CD4-positive, alpha-beta memory T cell (primary cell): ENCODE measurements at regions of chr12 and their contacts with region 1.

Region 1: GRCh38 chr12:117836999-117837736 is 131.6 kb downstream of the KSR2 start:
- DNase-seq: peak; percentile 48 to 63 (median 58)
- H3K4me3 ChIP-seq: no peak overlapping the region
- H3K4me3 Mint-ChIP-seq: peak overlapping the region in 7 of 8 donors; percentile 22 to 71 (median 59)
- H3K27ac ChIP-seq: no peak overlapping the region
- H3K27ac Mint-ChIP-seq: peak overlapping the region in 1 of 7 donors; percentile 37
- H3K4me1 ChIP-seq: no peaks in the 10 kb centered on the region
- H3K4me1 Mint-ChIP-seq: peaks cover 3 to 11% (median 6%) of the 10 kb centered on the region in 4 donors
- H3K27me3 ChIP-seq: no peaks in the 10 kb centered on the region
- H3K27me3 Mint-ChIP-seq: peaks cover 6 to 7% of the 10 kb centered on the region in 2 donors

Region 2: GRCh38 chr12:117212563-117213190 is 624.5 kb before region 1 on chr12:
- CTCF ChIA-PET with region 1: interaction called, 30 read pairs
- POLR2A ChIA-PET with region 1: no interaction called
- intact Hi-C with region 1: no loop called
- DNase-seq: peak; percentile 36 to 48 (median 43)
- H3K4me3 ChIP-seq: no peak overlapping the region
- H3K4me3 Mint-ChIP-seq: no peak overlapping the region
- H3K27ac ChIP-seq: no peak overlapping the region
- H3K27ac Mint-ChIP-seq: no peak overlapping the region
- H3K4me1 ChIP-seq: no peaks in the 10 kb centered on the region
- H3K4me1 Mint-ChIP-seq: no peaks in the 10 kb centered on the region
- H3K27me3 ChIP-seq: no peaks in the 10 kb centered on the region
- H3K27me3 Mint-ChIP-seq: peaks cover 12 to 19% of the 10 kb centered on the region in 2 donors

Region 3: GRCh38 chr12:117236456-117237001 is 600.6 kb before region 1 on chr12:
- CTCF ChIA-PET with region 1: interaction called, 19 read pairs
- POLR2A ChIA-PET with region 1: no interaction called
- intact Hi-C with region 1: no loop called
- DNase-seq: peak; percentile 39 to 56 (median 43)
- H3K4me3 ChIP-seq: no peak overlapping the region
- H3K4me3 Mint-ChIP-seq: peak overlapping the region in 1 of 8 donors; percentile 29
- H3K27ac ChIP-seq: no peak overlapping the region
- H3K27ac Mint-ChIP-seq: no peak overlapping the region
- H3K4me1 ChIP-seq: no peaks in the 10 kb centered on the region
- H3K4me1 Mint-ChIP-seq: peaks cover 0 to 4% (median 0%) of the 10 kb centered on the region in 4 donors
- H3K27me3 ChIP-seq: no peaks in the 10 kb centered on the region
- H3K27me3 Mint-ChIP-seq: peaks cover 10 to 12% of the 10 kb centered on the region in 2 donors

Region 4: GRCh38 chr12:117367011-117367638 is 470.0 kb before region 1 on chr12:
- CTCF ChIA-PET with region 1: interaction called, 27 read pairs
- POLR2A ChIA-PET with region 1: no interaction called
- intact Hi-C with region 1: loop called (anchors 5 kb)
- DNase-seq: peak in 2 of 5 donors; percentile 17 to 19
- H3K4me3 ChIP-seq: no peak overlapping the region
- H3K4me3 Mint-ChIP-seq: no peak overlapping the region
- H3K27ac ChIP-seq: no peak overlapping the region
- H3K27ac Mint-ChIP-seq: no peak overlapping the region
- H3K4me1 ChIP-seq: no peaks in the 10 kb centered on the region
- H3K4me1 Mint-ChIP-seq: no peaks in the 10 kb centered on the region
- H3K27me3 ChIP-seq: no peaks in the 10 kb centered on the region
- H3K27me3 Mint-ChIP-seq: peaks cover 19 to 28% of the 10 kb centered on the region in 2 donors

Region 5: GRCh38 chr12:117850048-117850447 is 12.9 kb after region 1 on chr12:
- CTCF ChIA-PET with region 1: interaction called, 44 read pairs
- POLR2A ChIA-PET with region 1: no interaction called
- intact Hi-C with region 1: no loop called
- DNase-seq: no peak
- H3K4me3 ChIP-seq: no peak overlapping the region
- H3K4me3 Mint-ChIP-seq: no peak overlapping the region
- H3K27ac ChIP-seq: no peak overlapping the region
- H3K27ac Mint-ChIP-seq: no peak overlapping the region
- H3K4me1 ChIP-seq: no peaks in the 10 kb centered on the region
- H3K4me1 Mint-ChIP-seq: no peaks in the 10 kb centered on the region
- H3K27me3 ChIP-seq: no peaks in the 10 kb centered on the region
- H3K27me3 Mint-ChIP-seq: peaks cover 10 to 11% of the 10 kb centered on the region in 2 donors

Region 6: DNA sequence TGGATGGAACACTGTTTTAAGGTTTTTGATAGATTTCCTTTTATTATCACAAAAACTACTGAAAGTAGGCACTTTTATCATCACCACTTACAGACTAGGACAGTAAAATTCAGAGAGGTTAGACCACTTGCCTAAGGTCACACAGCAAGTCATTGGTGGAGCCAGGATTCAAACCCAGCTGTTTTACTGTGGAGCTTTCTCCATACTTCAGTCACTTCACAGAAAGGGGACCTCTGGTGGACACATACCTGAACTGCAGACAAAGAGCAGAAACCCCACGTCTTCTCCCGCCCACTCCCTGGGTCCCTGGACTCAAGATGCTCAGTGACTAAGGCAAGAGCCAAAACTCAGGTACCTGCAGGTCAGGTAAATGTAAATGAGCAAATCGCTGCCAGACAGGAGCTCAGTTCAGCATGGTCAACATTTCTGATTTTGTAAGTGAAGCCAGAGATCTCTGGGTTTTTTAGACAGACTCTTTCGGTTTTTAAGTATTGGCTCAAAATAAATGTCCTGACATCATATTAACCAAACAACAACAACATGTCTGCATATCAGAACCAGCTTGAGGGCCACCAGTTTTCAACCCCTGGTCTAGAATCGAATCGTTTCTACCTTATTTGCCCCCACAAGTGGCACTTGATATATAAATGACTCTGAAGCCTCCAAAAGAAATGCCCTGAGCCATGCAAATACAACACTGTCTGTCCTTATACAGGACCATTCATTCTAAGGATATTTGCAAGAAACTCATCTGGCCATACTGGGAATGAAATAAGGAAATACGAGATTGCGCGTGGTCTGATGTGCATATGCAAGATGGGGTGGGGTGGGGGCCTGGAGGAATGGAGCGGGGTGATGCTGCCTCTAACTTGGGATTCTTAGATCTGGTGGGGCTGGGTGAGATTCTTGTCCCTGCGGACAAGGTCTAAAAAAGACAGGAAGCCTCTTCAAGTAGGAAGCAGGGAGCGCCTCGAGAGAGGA is 20.8 kb after region 1 on chr12:
- CTCF ChIA-PET with region 1: interaction called, 44 read pairs
- POLR2A ChIA-PET with region 1: interaction called, 3 read pairs
- intact Hi-C with region 1: no loop called
- DNase-seq: peak in 4 of 5 donors; percentile 15 to 44 (median 26)
- H3K4me3 ChIP-seq: no peak overlapping the region
- H3K4me3 Mint-ChIP-seq: no peak overlapping the region
- H3K27ac ChIP-seq: no peak overlapping the region
- H3K27ac Mint-ChIP-seq: no peak overlapping the region
- H3K4me1 ChIP-seq: peaks cover 5% of the 10 kb centered on the region
- H3K4me1 Mint-ChIP-seq: peaks cover 0 to 2% (median 0%) of the 10 kb centered on the region in 4 donors
- H3K27me3 ChIP-seq: no peaks in the 10 kb centered on the region
- H3K27me3 Mint-ChIP-seq: peaks cover 0 to 3% of the 10 kb centered on the region in 2 donors